Natural killer cell (primary cell): ENCODE measurements at regions of chr17 and their contacts with region 1.

Region 1: DNA sequence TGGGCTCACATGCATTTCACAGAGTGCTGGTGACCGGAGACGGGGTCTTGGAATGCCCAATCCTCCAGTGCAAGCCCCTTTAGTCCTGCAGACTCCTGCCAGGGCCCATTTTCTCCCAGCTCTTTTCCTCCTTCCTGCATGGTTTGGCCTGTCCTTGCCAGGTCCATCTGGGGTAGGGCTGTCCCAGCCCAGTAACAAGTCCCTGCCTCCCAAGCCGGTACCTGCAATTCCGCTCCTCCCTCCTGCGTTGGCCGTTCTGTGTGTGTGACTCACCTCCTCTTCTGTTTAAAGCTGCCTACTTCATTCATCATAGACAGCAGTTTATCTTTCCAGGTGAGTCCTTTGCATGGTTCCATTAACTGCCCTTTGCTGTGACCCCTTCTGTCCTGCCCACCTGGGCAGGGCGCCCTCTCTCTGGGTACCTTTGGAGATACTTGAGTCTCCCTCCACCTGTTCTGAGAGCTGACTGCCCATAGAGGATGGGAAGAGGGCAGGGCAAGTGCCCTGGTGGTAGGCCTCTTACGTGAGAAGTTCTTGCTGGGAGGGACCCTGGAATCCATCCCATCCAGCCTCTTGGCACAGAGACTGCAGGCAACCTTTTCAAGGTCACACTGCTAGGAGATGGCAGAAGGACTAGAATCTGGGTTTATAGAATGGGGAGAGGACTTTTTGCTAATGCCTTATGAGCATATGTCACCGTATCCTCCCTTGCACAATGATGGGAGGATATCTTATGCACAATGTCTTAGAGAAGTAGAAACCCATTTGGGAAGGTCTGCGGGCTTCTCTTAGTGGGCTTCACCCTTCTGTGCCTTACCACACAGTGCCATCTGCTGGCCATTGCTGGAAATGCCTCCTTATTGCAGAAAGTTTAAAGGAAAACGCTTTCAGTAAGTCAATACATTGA is 29.7 kb upstream of the LGALS9 start:
- DNase-seq: peak; percentile 78 to 90
- ATAC-seq: peak; percentile 70 to 72 (median 72)
- H3K4me3 ChIP-seq: no peak overlapping the region
- H3K4me3 Mint-ChIP-seq: no peak overlapping the region
- H3K27ac ChIP-seq: no peak overlapping the region
- H3K27ac Mint-ChIP-seq: no peak overlapping the region
- H3K4me1 ChIP-seq: peaks cover 11% of the 10 kb centered on the region
- H3K4me1 Mint-ChIP-seq: peaks cover 0 to 14% of the 10 kb centered on the region in 2 donors
- H3K27me3 ChIP-seq: no peaks in the 10 kb centered on the region
- H3K27me3 Mint-ChIP-seq: no peaks in the 10 kb centered on the region
- CTCF ChIP-seq: peak; percentile 93

Region 2: GRCh38 chr17:27245230-27245696 is 356.1 kb before region 1 on chr17:
- intact Hi-C with region 1: loop called (anchors 2 kb)
- DNase-seq: peak; percentile 23 to 59
- ATAC-seq: peak; percentile 72 to 92 (median 86)
- H3K4me3 ChIP-seq: no peak overlapping the region
- H3K4me3 Mint-ChIP-seq: no peak overlapping the region
- H3K27ac ChIP-seq: no peak overlapping the region
- H3K27ac Mint-ChIP-seq: peak overlapping the region in 1 of 2 donors; percentile 41
- H3K4me1 ChIP-seq: peaks cover 18% of the 10 kb centered on the region
- H3K4me1 Mint-ChIP-seq: peaks cover 0 to 12% of the 10 kb centered on the region in 2 donors
- H3K27me3 ChIP-seq: no peaks in the 10 kb centered on the region
- H3K27me3 Mint-ChIP-seq: peaks cover 0 to 6% of the 10 kb centered on the region in 2 donors
- CTCF ChIP-seq: peak; percentile 44

Region 3: DNA sequence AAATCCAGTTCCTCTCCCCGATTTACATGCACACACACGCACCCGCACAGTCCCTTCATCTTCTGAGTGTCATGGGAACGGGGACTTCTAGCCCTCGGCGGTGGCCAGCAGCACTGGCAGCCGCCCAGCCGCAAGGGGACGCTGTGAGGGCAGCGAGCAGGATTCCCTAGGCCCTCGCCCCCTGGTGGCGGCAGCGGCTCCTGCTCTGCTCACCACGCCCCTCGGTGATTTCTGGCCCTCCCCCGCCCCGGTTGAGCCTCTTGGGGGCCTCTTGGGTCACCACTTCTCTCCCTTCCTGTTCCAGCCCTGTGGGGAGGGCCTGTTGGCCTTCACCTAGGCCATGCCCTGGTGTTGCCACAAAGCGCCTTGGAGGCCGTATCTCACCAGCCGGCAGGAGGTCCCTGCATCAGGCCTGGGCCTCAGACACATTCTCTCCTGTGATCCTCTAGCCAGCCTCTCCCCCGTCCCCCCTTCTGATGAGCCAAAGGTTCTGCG is 220.3 kb before region 1 on chr17:
- intact Hi-C with region 1: loop called (anchors 1 kb)
- DNase-seq: peak; percentile 80 to 86
- ATAC-seq: peak; percentile 95 to 99 (median 99)
- H3K4me3 ChIP-seq: no peak overlapping the region
- H3K4me3 Mint-ChIP-seq: peak overlapping the region; percentile 17
- H3K27ac ChIP-seq: no peak overlapping the region
- H3K27ac Mint-ChIP-seq: no peak overlapping the region
- H3K4me1 ChIP-seq: peaks cover 14% of the 10 kb centered on the region
- H3K4me1 Mint-ChIP-seq: peaks cover 0 to 6% of the 10 kb centered on the region in 2 donors
- H3K27me3 ChIP-seq: no peaks in the 10 kb centered on the region
- H3K27me3 Mint-ChIP-seq: peaks cover 8 to 19% of the 10 kb centered on the region in 2 donors
- CTCF ChIP-seq: peak; percentile 96

Region 4: GRCh38 chr17:27489045-27489715 is 112.1 kb before region 1 on chr17:
- intact Hi-C with region 1: loop called (anchors 10 kb)
- DNase-seq: no peak
- ATAC-seq: no peak
- H3K4me3 ChIP-seq: no peak overlapping the region
- H3K4me3 Mint-ChIP-seq: no peak overlapping the region
- H3K27ac ChIP-seq: no peak overlapping the region
- H3K27ac Mint-ChIP-seq: peak overlapping the region in 1 of 2 donors; percentile 27
- H3K4me1 ChIP-seq: peaks cover 19% of the 10 kb centered on the region
- H3K4me1 Mint-ChIP-seq: peaks cover 23 to 39% of the 10 kb centered on the region in 2 donors
- H3K27me3 ChIP-seq: no peaks in the 10 kb centered on the region
- H3K27me3 Mint-ChIP-seq: no peaks in the 10 kb centered on the region
- CTCF ChIP-seq: no peak

Region 5: GRCh38 chr17:27630607-27631410 is 29.5 kb after region 1 on chr17 and contains the start of gene LGALS9:
- intact Hi-C with region 1: no loop called
- DNase-seq: peak in 1 of 2 donors; percentile 61
- ATAC-seq: peak; percentile 82 to 83 (median 82)
- H3K4me3 ChIP-seq: peak within 1 kb of the TSS; percentile 48
- H3K4me3 Mint-ChIP-seq: peak within 1 kb of the TSS; percentile 95
- H3K27ac ChIP-seq: peak within 1 kb of the TSS; percentile 72
- H3K27ac Mint-ChIP-seq: peak within 1 kb of the TSS; percentile 77 to 91
- H3K4me1 ChIP-seq: peaks cover 46% of the 10 kb centered on the region
- H3K4me1 Mint-ChIP-seq: peaks cover 48 to 58% of the 10 kb centered on the region in 2 donors
- H3K27me3 ChIP-seq: no peaks in the 10 kb centered on the region
- H3K27me3 Mint-ChIP-seq: no peaks in the 10 kb centered on the region
- CTCF ChIP-seq: no peak
- total RNA-seq, gene LGALS9: 83.4 to 142 (median 102) TPM

Region 6: GRCh38 chr17:27654654-27655524 is 53.6 kb after region 1 on chr17:
- intact Hi-C with region 1: loop called (anchors 1 kb)
- DNase-seq: peak; percentile 60 to 80
- ATAC-seq: peak; percentile 60 to 73 (median 69)
- H3K4me3 ChIP-seq: no peak overlapping the region
- H3K4me3 Mint-ChIP-seq: no peak overlapping the region
- H3K27ac ChIP-seq: no peak overlapping the region
- H3K27ac Mint-ChIP-seq: no peak overlapping the region
- H3K4me1 ChIP-seq: peaks cover 7% of the 10 kb centered on the region
- H3K4me1 Mint-ChIP-seq: peaks cover 6% of the 10 kb centered on the region in 2 donors
- H3K27me3 ChIP-seq: no peaks in the 10 kb centered on the region
- H3K27me3 Mint-ChIP-seq: no peaks in the 10 kb centered on the region
- CTCF ChIP-seq: peak; percentile 93